Breast epithelium (tissue), 4 donors: ENCODE measurements at regions of chr22 and their contacts with region 1.

Region 1: GRCh38 chr22:44592824-44593148 is 94.8 kb upstream of the RTL6 start:
- DNase-seq: no peak
- H3K4me3 ChIP-seq: no peak overlapping the region
- H3K27ac ChIP-seq: no peak overlapping the region
- H3K4me1 ChIP-seq: no peaks in the 10 kb centered on the region
- H3K27me3 ChIP-seq: peaks cover 0 to 37% of the 10 kb centered on the region in 2 donors
- CTCF ChIP-seq: no peak
- POLR2A ChIP-seq: no peak

Region 2: GRCh38 chr22:43553451-43554258 is 1039.1 kb before region 1 on chr22:
- intact Hi-C with region 1: loop called (anchors 5 kb)
- DNase-seq: peak in 1 of 2 donors; percentile 33
- H3K4me3 ChIP-seq: no peak overlapping the region
- H3K27ac ChIP-seq: no peak overlapping the region
- H3K4me1 ChIP-seq: no peaks in the 10 kb centered on the region
- H3K27me3 ChIP-seq: no peaks in the 10 kb centered on the region
- CTCF ChIP-seq: no peak
- POLR2A ChIP-seq: no peak